ENCODE measurements at regions of chr10 and their contacts with region 1.

Region 1: DNA sequence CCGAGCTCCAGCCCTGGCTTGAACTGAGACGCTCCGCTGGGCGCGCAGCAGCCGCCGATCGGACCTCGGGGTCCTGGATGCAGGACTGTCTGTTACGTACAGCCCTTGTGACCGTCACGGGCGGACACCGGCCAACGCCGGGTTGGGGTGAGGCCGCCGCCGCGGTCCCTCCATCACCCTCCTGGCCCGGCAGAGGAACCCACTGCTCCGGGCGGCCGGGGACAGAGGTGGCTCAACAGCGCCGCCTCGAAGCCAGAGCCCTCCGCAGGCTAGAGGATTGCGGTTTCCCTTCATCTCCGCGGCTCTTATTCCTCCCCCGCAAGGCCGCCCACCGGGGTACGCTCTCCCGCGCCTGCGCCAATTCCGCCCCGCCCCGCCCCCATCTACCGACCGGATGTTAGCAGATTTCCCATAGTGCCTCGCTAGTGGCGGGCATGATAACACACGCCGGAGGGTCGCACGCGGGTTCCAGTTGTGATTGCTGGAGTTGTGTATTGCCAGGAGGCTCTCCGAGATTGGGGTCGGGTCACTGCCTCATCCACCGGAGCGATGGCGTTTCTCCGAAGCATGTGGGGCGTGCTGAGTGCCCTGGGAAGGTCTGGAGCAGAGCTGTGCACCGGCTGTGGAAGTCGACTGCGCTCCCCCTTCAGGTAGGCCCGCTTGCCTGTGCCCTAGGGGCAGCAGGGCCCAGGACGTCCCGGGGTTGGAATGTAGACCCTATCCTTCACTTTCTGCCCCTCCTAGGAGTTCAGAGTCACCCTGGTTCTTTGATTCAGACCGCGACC is at the start of gene TFAM:
- DNase-seq: peak; percentile 97
- H3K4me3 ChIP-seq: peak within 1 kb of the TSS; percentile 55 to 90 (median 64)
- H3K27ac ChIP-seq: peak within 1 kb of the TSS; percentile 26
- H3K4me1 ChIP-seq: peaks cover 16% of the 10 kb centered on the region
- H3K27me3 ChIP-seq: no peaks in the 10 kb centered on the region
- CTCF ChIP-seq: peak; percentile 59 to 74
- POLR2A ChIP-seq: peak; percentile 92
- total RNA-seq, gene TFAM: 45.1 and 53.0 TPM in 2 replicates

Region 2: GRCh38 chr10:58305821-58306220 is 79.4 kb before region 1 on chr10:
- CTCF ChIA-PET with region 1: interaction called, 40 read pairs
- POLR2A ChIA-PET with region 1: no interaction called
- dilution Hi-C with region 1: no loop called
- intact Hi-C with region 1: no loop called
- DNase-seq: no peak
- H3K4me3 ChIP-seq: no peak overlapping the region
- H3K27ac ChIP-seq: no peak overlapping the region
- H3K4me1 ChIP-seq: no peaks in the 10 kb centered on the region
- H3K27me3 ChIP-seq: peaks cover 9 to 15% of the 10 kb centered on the region in 2 experiments
- CTCF ChIP-seq: no peak
- POLR2A ChIP-seq: no peak

Region 3: GRCh38 chr10:58334817-58335305 is 50.3 kb before region 1 on chr10 and contains the start of gene UBE2D1:
- CTCF ChIA-PET with region 1: no interaction called
- POLR2A ChIA-PET with region 1: interaction called, 6 read pairs
- dilution Hi-C with region 1: no loop called
- intact Hi-C with region 1: loop called (anchors 1 kb)
- DNase-seq: peak; percentile 69
- H3K4me3 ChIP-seq: peak within 1 kb of the TSS; percentile 65 to 82 (median 73)
- H3K27ac ChIP-seq: peak within 1 kb of the TSS; percentile 48
- H3K4me1 ChIP-seq: peaks cover 5% of the 10 kb centered on the region
- H3K27me3 ChIP-seq: peaks cover 16 to 23% of the 10 kb centered on the region in 2 experiments
- CTCF ChIP-seq: no peak
- POLR2A ChIP-seq: peak; percentile 92
- total RNA-seq, gene UBE2D1: 14.5 and 16.9 TPM in 2 replicates

Region 4: GRCh38 chr10:58372607-58373441 is 12.4 kb before region 1 on chr10:
- CTCF ChIA-PET with region 1: interaction called, 6 read pairs
- POLR2A ChIA-PET with region 1: no interaction called
- dilution Hi-C with region 1: no loop called
- intact Hi-C with region 1: loop called (anchors 1 kb)
- DNase-seq: no peak
- H3K4me3 ChIP-seq: no peak overlapping the region
- H3K27ac ChIP-seq: no peak overlapping the region
- H3K4me1 ChIP-seq: no peaks in the 10 kb centered on the region
- H3K27me3 ChIP-seq: no peaks in the 10 kb centered on the region
- CTCF ChIP-seq: no peak
- POLR2A ChIP-seq: no peak